ENCODE measurements at regions of chr1 and their contacts with region 1.

Region 1: DNA sequence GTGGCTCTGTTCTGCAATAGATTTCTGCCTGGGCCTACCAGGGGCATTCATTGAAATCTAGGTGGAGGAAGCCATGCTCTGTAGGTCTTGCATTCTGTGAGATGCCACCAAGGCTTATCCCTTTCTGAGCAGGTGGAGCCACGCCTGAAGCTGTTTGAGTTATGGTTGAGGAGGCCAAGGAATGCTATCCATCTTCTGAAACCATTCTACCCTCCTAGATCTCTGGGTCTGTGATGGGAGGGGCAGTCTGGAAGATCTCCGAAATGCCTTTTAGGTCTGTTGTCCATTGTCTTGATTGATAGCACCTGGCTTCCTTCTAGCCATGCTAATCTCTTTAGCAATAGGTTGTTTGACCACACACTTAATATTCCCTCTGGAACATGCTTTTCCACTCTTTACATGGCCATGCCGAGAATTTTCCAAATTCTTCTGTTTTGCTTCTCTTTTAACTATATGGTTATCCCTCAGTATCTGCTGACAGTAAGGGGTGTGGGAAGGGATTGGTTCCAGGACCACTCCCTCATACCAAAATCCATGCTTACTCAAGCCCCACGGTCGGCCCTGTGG is 45.2 kb downstream of the AK4 start:
- DNase-seq: no peak
- H3K4me3 ChIP-seq: no peak overlapping the region
- H3K27ac ChIP-seq: no peak overlapping the region
- H3K4me1 ChIP-seq: no peaks in the 10 kb centered on the region
- H3K27me3 ChIP-seq: no peaks in the 10 kb centered on the region
- CTCF ChIP-seq: no peak
- POLR2A ChIP-seq: no peak

Region 2: GRCh38 chr1:63651161-63651701 is 1542.0 kb before region 1 on chr1:
- intact Hi-C with region 1: no loop called
- DNase-seq: no peak
- H3K4me3 ChIP-seq: no peak overlapping the region
- H3K27ac ChIP-seq: peak overlapping the region; percentile 8 to 34
- H3K4me1 ChIP-seq: peaks cover 0 to 2% of the 10 kb centered on the region in 2 donors
- H3K27me3 ChIP-seq: no peaks in the 10 kb centered on the region
- CTCF ChIP-seq: no peak
- POLR2A ChIP-seq: no peak

Region 3: GRCh38 chr1:65216989-65217388 is 23.8 kb after region 1 on chr1:
- intact Hi-C with region 1: loop called (anchors 2 kb)
- DNase-seq: no peak
- H3K4me3 ChIP-seq: no peak overlapping the region
- H3K27ac ChIP-seq: no peak overlapping the region
- H3K4me1 ChIP-seq: no peaks in the 10 kb centered on the region
- H3K27me3 ChIP-seq: no peaks in the 10 kb centered on the region
- CTCF ChIP-seq: no peak
- POLR2A ChIP-seq: no peak